Thyroid gland (tissue), 4 donors: ENCODE measurements at regions of chr14 and their contacts with region 1.

Region 1: DNA sequence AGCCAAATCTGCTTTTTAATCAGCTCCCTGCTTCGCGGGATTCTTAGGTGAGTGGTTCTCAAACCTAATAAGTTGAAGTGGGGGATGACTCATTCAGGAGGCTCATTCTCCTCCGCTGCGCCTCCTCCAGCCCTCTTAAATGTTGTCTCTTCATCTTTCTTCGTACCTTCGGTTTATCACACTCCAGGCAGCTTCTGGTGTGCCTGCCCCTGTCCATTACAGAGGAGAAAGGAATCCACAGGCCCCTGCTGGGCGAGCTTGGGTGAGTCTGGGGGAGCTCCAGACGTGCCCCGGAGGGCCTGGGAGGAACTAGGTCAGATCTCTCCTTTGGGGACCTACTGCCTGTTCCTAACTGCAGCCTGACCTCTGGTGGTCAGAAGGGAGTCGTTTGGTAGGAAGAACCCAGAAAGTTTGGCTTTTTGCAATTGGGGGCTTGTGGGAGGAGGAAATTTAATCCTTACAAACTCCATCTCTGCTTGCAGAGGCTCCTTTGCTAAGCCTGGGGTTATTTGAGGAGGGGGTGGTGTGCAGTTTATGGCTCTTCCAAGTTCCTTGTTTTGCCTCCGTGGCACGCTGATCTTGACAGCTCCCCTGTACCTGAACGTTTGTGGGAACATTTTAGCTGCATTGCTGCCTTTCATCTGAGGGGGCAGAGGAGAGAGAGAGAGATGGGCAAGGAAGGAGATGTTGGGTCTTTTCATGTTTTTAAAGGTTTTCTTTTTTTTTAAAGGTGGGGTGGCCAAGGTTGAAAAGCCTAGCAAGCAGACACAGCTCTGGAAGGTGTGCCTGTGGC is 84.1 kb upstream of the GNG2 start:
- DNase-seq: peak; percentile 50 to 52
- H3K4me3 ChIP-seq: no peak overlapping the region
- H3K27ac ChIP-seq: no peak overlapping the region
- H3K4me1 ChIP-seq: peaks cover 2 to 5% of the 10 kb centered on the region in 2 donors
- H3K27me3 ChIP-seq: no peaks in the 10 kb centered on the region
- CTCF ChIP-seq: peak in 5 of 6 experiments; percentile 25 to 73 (median 52)
- POLR2A ChIP-seq: no peak

Region 2: DNA sequence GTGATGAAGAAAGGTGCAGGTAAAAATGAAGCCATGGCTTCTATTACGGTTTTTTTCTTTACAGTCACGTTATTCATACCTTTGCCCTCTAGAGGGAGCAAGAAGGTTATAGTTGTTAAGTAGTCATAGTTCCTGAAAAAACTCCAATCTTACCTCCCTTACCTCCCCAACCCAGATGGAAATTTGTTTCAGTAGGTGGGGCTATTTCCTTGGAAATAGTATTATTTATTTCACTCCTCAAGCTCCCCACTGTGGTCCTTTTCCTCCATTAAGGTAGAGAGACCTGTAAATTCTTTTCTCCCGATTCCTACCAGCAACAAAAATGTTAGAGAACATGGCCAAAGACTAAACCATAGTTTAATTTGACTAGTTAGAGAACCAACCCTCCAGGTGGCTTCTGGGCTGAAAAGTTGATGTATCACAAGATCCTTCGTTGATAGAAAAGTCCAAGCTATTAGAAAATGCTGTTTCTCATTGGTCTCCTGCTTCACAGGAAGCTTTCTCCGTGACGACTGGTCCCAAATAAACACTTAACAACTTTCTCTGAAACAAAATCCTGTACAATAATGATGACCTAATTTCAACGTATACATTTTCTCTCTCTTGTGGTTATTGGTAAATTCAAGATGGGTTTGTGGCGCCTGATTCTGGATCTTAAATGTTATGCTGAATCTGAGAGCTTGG is 492.8 kb before region 1 on chr14:
- intact Hi-C with region 1: loop called (anchors 2 kb)
- DNase-seq: no peak
- H3K4me3 ChIP-seq: no peak overlapping the region
- H3K27ac ChIP-seq: no peak overlapping the region
- H3K4me1 ChIP-seq: no peaks in the 10 kb centered on the region
- H3K27me3 ChIP-seq: no peaks in the 10 kb centered on the region
- CTCF ChIP-seq: peak; percentile 52 to 95 (median 70)
- POLR2A ChIP-seq: no peak

Region 3: DNA sequence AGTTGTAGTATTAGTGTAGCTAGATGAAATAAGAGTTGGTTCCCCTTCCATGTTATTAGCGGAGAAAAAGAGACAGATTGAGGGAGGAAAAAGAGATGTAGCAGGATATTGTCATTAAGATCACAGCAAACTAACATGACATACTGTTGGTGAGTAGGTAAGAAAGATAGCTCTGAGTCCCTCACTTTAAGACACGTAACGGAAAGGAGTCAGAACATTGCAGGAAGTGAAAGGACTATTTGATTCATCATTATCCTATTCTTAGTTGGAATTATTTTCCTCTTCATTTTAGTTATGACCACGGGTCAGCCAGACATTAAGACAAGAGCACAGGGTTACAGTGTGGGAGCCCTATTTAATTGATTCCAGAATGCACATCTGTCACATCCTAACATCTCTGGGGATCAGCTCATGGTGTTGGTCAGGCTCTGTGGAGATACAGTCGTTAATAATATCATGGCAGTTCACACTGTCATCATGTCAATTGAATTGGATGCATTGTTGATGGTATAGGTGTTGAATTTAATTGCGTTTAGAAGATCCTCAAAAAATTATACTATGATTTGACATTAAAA is 481.3 kb before region 1 on chr14:
- intact Hi-C with region 1: no loop called
- DNase-seq: no peak
- H3K4me3 ChIP-seq: no peak overlapping the region
- H3K27ac ChIP-seq: no peak overlapping the region
- H3K4me1 ChIP-seq: peaks cover 0 to 11% of the 10 kb centered on the region in 2 donors
- H3K27me3 ChIP-seq: no peaks in the 10 kb centered on the region
- CTCF ChIP-seq: no peak
- POLR2A ChIP-seq: no peak

Region 4: GRCh38 chr14:51651388-51652167 is 124.7 kb before region 1 on chr14 and contains the start of gene FRMD6:
- intact Hi-C with region 1: loop called (anchors 5 kb)
- DNase-seq: peak; percentile 85 to 87
- H3K4me3 ChIP-seq: peak within 1 kb of the TSS; percentile 41 to 97 (median 72)
- H3K27ac ChIP-seq: peak within 1 kb of the TSS; percentile 88 to 97 (median 94)
- H3K4me1 ChIP-seq: no peaks in the 10 kb centered on the region
- H3K27me3 ChIP-seq: no peaks in the 10 kb centered on the region
- CTCF ChIP-seq: peak; percentile 53 to 86 (median 74)
- POLR2A ChIP-seq: peak in 1 of 2 donors; percentile 69
- total RNA-seq, gene FRMD6: 17.8 to 36.8 (median 25.8) TPM

Region 5: DNA sequence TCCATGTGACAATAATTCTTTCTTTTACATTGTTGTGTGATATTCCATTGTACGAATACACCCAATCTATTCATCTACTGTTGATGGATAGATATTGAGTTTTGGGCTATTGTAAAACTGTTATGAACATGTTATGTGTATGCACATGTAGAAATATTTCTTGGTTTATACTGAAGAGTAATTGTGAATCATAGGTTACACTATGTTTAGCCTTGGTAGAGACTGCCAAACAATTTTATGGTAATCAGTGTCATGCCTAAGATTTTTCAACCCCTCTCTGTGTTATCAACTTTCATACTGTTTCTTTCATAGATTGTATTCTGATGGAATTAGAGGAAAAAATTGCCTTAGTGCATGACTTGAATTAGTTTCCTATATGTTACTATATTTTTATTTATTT is 85.1 kb before region 1 on chr14:
- intact Hi-C with region 1: no loop called
- DNase-seq: no peak
- H3K4me3 ChIP-seq: no peak overlapping the region
- H3K27ac ChIP-seq: no peak overlapping the region
- H3K4me1 ChIP-seq: no peaks in the 10 kb centered on the region
- H3K27me3 ChIP-seq: no peaks in the 10 kb centered on the region
- CTCF ChIP-seq: no peak
- POLR2A ChIP-seq: no peak

Region 6: DNA sequence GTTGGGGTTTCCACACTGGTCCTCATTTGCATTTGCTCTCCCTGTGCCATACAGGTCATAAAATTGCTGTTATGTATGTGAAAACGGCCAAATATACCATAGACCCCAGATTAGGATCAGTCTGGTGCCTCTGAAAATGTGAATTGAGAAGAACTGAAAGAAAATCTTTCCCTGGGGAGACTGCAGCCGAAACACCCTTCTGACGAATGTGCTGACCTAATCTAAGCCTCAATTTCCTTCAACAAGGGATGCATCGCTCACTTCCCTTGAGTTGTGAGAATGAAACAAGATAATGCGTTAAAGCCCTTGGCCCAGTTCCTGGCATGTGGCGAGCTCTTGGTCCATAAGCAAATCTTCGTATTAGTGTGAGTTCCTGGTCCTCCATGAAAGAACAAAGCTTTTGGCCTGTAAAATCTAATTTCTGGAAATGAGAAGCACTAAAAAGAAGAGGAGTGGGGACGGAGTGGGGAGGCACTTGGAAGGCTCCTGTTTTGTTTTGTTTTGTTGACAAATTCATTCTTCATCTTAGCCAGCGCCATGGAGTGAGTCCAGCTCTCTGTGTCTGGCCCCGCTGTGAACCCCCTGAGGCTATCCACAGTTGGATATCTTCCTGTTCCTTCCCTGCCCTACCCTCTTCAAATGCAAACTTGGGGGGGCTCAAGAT is 163.6 kb after region 1 on chr14:
- intact Hi-C with region 1: no loop called
- DNase-seq: no peak
- H3K4me3 ChIP-seq: no peak overlapping the region
- H3K27ac ChIP-seq: no peak overlapping the region
- H3K4me1 ChIP-seq: no peaks in the 10 kb centered on the region
- H3K27me3 ChIP-seq: no peaks in the 10 kb centered on the region
- CTCF ChIP-seq: no peak
- POLR2A ChIP-seq: no peak

Region 7: DNA sequence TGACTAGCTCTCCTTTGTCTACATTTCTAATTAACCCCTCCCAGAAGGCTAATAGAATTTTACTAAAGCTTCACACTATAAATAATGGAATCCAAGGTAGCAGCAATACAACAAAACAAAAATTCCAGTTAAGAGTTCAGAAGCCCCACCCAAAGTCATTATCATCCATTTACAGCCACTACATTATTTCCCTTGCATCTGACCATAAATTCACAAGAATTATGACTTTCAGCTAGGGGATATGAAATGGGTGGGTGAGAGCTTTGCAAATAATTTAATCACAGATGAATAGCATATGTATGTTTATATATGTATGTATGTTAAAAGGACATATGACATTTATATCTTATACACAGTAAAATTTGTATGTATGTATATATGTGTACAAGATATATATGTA is 425.9 kb after region 1 on chr14:
- intact Hi-C with region 1: no loop called
- DNase-seq: no peak
- H3K4me3 ChIP-seq: no peak overlapping the region
- H3K27ac ChIP-seq: no peak overlapping the region
- H3K4me1 ChIP-seq: no peaks in the 10 kb centered on the region
- H3K27me3 ChIP-seq: no peaks in the 10 kb centered on the region
- CTCF ChIP-seq: no peak
- POLR2A ChIP-seq: no peak